GM12878 (cell line): ENCODE measurements at regions of chr2 and their contacts with region 1.

Region 1: GRCh38 chr2:142989273-142990204 is 112.1 kb downstream of the KYNU start:
- DNase-seq: no peak
- ATAC-seq: peak; percentile 88
- H3K4me3 ChIP-seq: no peak overlapping the region
- H3K27ac ChIP-seq: no peak overlapping the region
- H3K4me1 ChIP-seq: peaks cover 5% of the 10 kb centered on the region; the same call in 1 of the 2 replicates
- H3K27me3 ChIP-seq: no peaks in the 10 kb centered on the region
- CTCF ChIP-seq: peak in 2 of 3 experiments; percentile 26 to 48; a peak in 3 of 6 replicates
- EP300 ChIP-seq: no peak
- POLR2A ChIP-seq: no peak
- RAD21 ChIP-seq: peak; percentile 72

Region 2: DNA sequence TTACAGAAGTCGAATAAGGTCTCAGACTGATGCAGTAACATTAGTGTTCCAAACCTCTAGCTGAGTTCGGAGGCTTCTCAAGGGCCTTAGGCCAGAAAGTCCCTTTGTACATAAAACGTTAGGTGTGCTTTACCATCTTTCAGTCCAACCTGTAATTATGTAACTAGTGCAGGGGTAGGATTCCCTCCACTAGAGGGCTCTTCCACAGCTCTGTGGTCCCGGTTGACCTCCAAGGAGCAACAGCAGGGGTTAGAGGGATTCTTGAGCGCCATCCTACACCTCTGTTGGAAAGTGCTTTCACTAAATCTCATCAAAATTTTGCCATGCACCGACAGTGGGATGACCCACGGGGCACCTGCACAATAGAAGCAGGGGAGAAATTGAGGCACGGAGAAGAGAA is 702.9 kb before region 1 on chr2:
- CTCF ChIA-PET with region 1: no interaction called
- POLR2A ChIA-PET with region 1: no interaction called
- RAD21 ChIA-PET with region 1: no interaction called
- SMC1A ChIA-PET with region 1: interaction called, 3 read pairs
- in situ Hi-C with region 1: loop called (anchors 25 kb)
- intact Hi-C with region 1: loop called (anchors 10 kb)
- DNase-seq: no peak
- ATAC-seq: peak; percentile 91
- H3K4me3 ChIP-seq: no peak overlapping the region
- H3K27ac ChIP-seq: no peak overlapping the region
- H3K4me1 ChIP-seq: no peaks in the 10 kb centered on the region
- H3K27me3 ChIP-seq: no peaks in the 10 kb centered on the region
- CTCF ChIP-seq: peak; percentile 39 to 58 (median 55)
- EP300 ChIP-seq: no peak
- POLR2A ChIP-seq: no peak
- RAD21 ChIP-seq: peak; percentile 37

Region 3: DNA sequence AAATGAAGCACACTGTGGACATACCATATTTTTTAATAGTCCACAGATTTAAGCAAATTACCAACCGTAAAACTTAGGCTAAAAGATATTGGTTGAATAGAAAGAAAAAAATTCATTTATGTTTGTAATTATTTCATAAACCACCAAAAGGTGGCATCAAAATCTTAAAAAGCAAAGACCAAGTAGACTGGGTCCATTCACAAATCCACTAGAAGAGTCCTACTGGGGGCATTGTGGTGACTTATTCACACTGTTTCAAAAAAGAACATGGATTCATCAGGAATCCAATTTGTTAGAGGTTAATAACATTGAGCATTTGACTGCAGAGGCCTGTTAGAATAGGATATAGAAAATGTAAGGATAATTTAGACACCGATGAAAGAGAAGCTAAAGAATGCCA is 307.0 kb before region 1 on chr2:
- CTCF ChIA-PET with region 1: interaction called, 26 read pairs
- POLR2A ChIA-PET with region 1: interaction called, 3 read pairs
- RAD21 ChIA-PET with region 1: interaction called, 11 read pairs
- SMC1A ChIA-PET with region 1: interaction called, 9 read pairs
- in situ Hi-C with region 1: loop called (anchors 5 kb)
- intact Hi-C with region 1: loop called (anchors 2 kb)
- DNase-seq: no peak
- ATAC-seq: peak; percentile 39; the same call in 2 of the 3 replicates
- H3K4me3 ChIP-seq: no peak overlapping the region
- H3K27ac ChIP-seq: no peak overlapping the region
- H3K4me1 ChIP-seq: no peaks in the 10 kb centered on the region
- H3K27me3 ChIP-seq: peaks cover 0 to 4% of the 10 kb centered on the region in 2 experiments; a peak in 1 of 4 replicates
- CTCF ChIP-seq: peak in 1 of 3 experiments; percentile 36; a peak in 1 of 6 replicates
- EP300 ChIP-seq: no peak
- POLR2A ChIP-seq: no peak
- RAD21 ChIP-seq: peak; percentile 79

Region 4: GRCh38 chr2:142796161-142796560 is 193.4 kb before region 1 on chr2:
- CTCF ChIA-PET with region 1: interaction called, 31 read pairs
- POLR2A ChIA-PET with region 1: no interaction called
- RAD21 ChIA-PET with region 1: no interaction called
- SMC1A ChIA-PET with region 1: interaction called, 6 read pairs
- in situ Hi-C with region 1: no loop called
- intact Hi-C with region 1: no loop called
- DNase-seq: no peak
- ATAC-seq: peak; percentile 30; the same call in 1 of the 3 replicates
- H3K4me3 ChIP-seq: no peak overlapping the region
- H3K27ac ChIP-seq: no peak overlapping the region
- H3K4me1 ChIP-seq: no peaks in the 10 kb centered on the region
- H3K27me3 ChIP-seq: no peaks in the 10 kb centered on the region
- CTCF ChIP-seq: peak in 1 of 3 experiments; percentile 27; a peak in 2 of 6 replicates
- EP300 ChIP-seq: no peak
- POLR2A ChIP-seq: no peak
- RAD21 ChIP-seq: 0 out of 2 replicates have a peak, but pooled peaks have one; percentile 12

Region 5: GRCh38 chr2:143000599-143000998 is 11.1 kb after region 1 on chr2:
- CTCF ChIA-PET with region 1: interaction called, 10 read pairs
- POLR2A ChIA-PET with region 1: no interaction called
- RAD21 ChIA-PET with region 1: no interaction called
- SMC1A ChIA-PET with region 1: interaction called, 4 read pairs
- in situ Hi-C with region 1: no loop called
- intact Hi-C with region 1: no loop called
- DNase-seq: no peak
- ATAC-seq: no peak
- H3K4me3 ChIP-seq: no peak overlapping the region
- H3K27ac ChIP-seq: no peak overlapping the region
- H3K4me1 ChIP-seq: no peaks in the 10 kb centered on the region
- H3K27me3 ChIP-seq: no peaks in the 10 kb centered on the region
- CTCF ChIP-seq: no peak
- EP300 ChIP-seq: no peak
- POLR2A ChIP-seq: no peak
- RAD21 ChIP-seq: no peak

Region 6: GRCh38 chr2:143083636-143084035 is 94.1 kb after region 1 on chr2:
- CTCF ChIA-PET with region 1: no interaction called
- POLR2A ChIA-PET with region 1: no interaction called
- RAD21 ChIA-PET with region 1: no interaction called
- SMC1A ChIA-PET with region 1: no interaction called
- in situ Hi-C with region 1: no loop called
- intact Hi-C with region 1: no loop called
- DNase-seq: no peak
- ATAC-seq: peak; percentile 51
- H3K4me3 ChIP-seq: no peak overlapping the region
- H3K27ac ChIP-seq: no peak overlapping the region
- H3K4me1 ChIP-seq: no peaks in the 10 kb centered on the region
- H3K27me3 ChIP-seq: no peaks in the 10 kb centered on the region
- CTCF ChIP-seq: no peak
- EP300 ChIP-seq: no peak
- POLR2A ChIP-seq: no peak
- RAD21 ChIP-seq: no peak